K562 (cell line): ENCODE measurements at regions of chr3 and their contacts with region 1.

Region 1: DNA sequence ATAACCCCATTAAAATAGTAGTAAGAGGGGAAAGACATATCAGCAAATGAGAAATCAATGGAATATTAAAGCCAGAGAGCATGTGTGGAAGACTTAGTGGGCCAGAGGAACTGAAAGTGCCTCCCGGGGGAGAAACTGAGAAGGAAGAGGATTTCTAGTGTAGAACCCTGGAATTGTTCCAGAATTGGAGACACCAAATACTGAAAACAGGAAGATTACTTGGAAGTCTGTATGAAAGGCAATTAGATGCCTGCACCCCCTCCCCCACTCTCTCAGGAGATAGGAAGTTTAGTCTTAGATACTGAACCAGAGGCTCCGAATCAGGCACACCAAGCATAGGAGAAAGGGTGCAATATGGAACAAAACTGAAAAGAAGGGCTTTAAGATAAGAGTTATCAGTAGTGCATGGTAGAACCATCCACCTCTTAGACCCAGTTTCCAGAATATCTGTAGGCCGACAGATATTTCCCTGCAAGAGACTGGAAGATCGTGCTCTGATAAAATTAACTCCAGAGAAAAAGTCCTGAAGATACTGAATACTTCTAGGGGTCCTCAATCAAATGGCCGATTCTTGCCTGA is 32.4 kb downstream of the KLHL18 start:
- DNase-seq: peak; percentile 33 to 92 (median 60)
- ATAC-seq: peak; percentile 83
- H3K4me3 ChIP-seq: no peak overlapping the region
- H3K27ac ChIP-seq: peak overlapping the region; percentile 65
- H3K4me1 ChIP-seq: peaks cover 24 to 52% of the 10 kb centered on the region in 2 experiments
- H3K27me3 ChIP-seq: no peaks in the 10 kb centered on the region; a peak in 1 of 5 replicates
- CTCF ChIP-seq: no peak
- EP300 ChIP-seq: peak; percentile 97
- POLR2A ChIP-seq: no peak
- RAD21 ChIP-seq: peak; percentile 19 to 38; a peak in 3 of 4 replicates

Region 2: DNA sequence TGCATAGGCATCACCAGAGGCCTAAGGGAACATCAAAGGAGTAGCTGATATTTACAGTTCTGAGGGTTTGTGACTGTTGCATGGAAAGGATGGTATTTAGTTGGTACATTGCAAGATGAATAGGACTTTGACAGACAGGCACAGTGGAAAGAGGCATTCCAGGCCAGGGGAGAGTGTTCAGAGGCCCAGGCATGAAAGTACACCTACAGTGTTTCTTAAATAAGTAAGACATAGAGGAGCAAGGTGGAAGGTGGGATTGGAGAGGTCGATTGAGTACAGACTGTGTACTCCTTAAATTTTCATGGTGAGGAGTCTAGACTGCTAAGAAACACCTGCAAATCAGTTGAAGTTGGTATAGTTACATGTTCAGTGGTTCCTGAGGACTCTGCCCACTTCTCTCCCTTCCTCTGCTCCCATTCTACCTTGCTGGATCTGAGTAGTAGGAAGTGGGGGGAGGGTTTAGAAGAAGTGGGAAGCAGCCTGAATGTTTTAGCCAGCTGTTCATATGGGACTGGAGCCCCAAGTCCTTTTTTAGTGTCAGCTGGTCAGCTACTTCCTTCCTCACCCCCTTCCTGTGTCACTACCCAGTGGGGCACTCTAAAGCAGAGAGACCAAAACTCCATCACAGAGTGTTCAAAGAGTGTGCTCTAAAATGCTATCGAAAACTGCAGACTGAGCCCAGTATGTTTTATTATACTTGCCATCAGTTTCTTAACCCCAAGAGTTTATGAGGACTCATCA is 18.4 kb before region 1 on chr3:
- CTCF ChIA-PET with region 1: no interaction called
- POLR2A ChIA-PET with region 1: interaction called, 31 read pairs
- in situ Hi-C with region 1: no loop called
- intact Hi-C with region 1: loop called (anchors 2 kb)
- DNase-seq: no peak
- ATAC-seq: peak; percentile 7; the same call in 2 of the 3 replicates
- H3K4me3 ChIP-seq: no peak overlapping the region
- H3K27ac ChIP-seq: no peak overlapping the region; the same call in 2 of the 3 replicates
- H3K4me1 ChIP-seq: peaks cover 11 to 50% of the 10 kb centered on the region in 2 experiments; a peak in 4 of 5 replicates
- H3K27me3 ChIP-seq: no peaks in the 10 kb centered on the region
- CTCF ChIP-seq: no peak
- EP300 ChIP-seq: no peak
- POLR2A ChIP-seq: no peak
- RAD21 ChIP-seq: no peak